ENCODE measurements at regions of chr1 and their contacts with region 1.

Region 1: GRCh38 chr1:235683653-235684052 is 34.1 kb upstream of the GNG4 start:
- DNase-seq: no peak
- H3K4me3 ChIP-seq: no peak overlapping the region
- H3K27ac ChIP-seq: no peak overlapping the region
- H3K4me1 ChIP-seq: no peaks in the 10 kb centered on the region
- H3K27me3 ChIP-seq: no peaks in the 10 kb centered on the region
- CTCF ChIP-seq: no peak

Region 2: GRCh38 chr1:235468004-235468403 is 215.6 kb before region 1 on chr1:
- CTCF ChIA-PET with region 1: interaction called, 19 read pairs
- POLR2A ChIA-PET with region 1: no interaction called
- intact Hi-C with region 1: no loop called
- DNase-seq: no peak
- H3K4me3 ChIP-seq: no peak overlapping the region
- H3K27ac ChIP-seq: no peak overlapping the region
- H3K4me1 ChIP-seq: peaks cover 15% of the 10 kb centered on the region
- H3K27me3 ChIP-seq: no peaks in the 10 kb centered on the region
- CTCF ChIP-seq: no peak

Region 3: GRCh38 chr1:235758931-235759330 is 75.3 kb after region 1 on chr1:
- CTCF ChIA-PET with region 1: no interaction called
- POLR2A ChIA-PET with region 1: interaction called, 10 read pairs
- intact Hi-C with region 1: no loop called
- DNase-seq: no peak
- H3K4me3 ChIP-seq: no peak overlapping the region
- H3K27ac ChIP-seq: no peak overlapping the region
- H3K4me1 ChIP-seq: no peaks in the 10 kb centered on the region
- H3K27me3 ChIP-seq: no peaks in the 10 kb centered on the region
- CTCF ChIP-seq: no peak